ENCODE measurements at regions of chr7 and their contacts with region 1.

Region 1: GRCh38 chr7:112510001-112510742 is 29.4 kb downstream of the LSMEM1 start:
- DNase-seq: peak; percentile 10
- H3K4me3 Mint-ChIP-seq: no peak overlapping the region
- H3K27ac Mint-ChIP-seq: no peak overlapping the region
- H3K4me1 Mint-ChIP-seq: peaks cover 11% of the 10 kb centered on the region
- H3K27me3 Mint-ChIP-seq: no peaks in the 10 kb centered on the region

Region 2: DNA sequence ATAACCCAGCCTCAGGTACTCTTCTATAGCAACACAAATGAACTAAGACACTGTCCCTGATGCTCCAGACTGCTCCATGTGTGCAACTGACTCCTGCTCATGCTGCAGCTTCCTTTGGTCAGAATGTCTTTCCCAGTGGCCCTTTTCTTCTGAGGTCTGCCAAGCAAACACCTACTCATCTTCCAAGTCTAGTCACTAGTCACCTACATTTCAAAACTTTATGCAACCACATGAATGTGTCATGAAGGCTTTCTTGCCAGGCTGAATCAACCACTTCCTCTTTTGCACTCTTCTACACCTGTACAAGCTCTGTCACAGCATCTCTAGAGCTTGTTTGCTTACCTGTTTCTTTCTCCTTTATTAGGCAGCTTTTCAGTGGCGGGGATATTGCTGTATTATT is 46.5 kb after region 1 on chr7:
- CTCF ChIA-PET with region 1: no interaction called
- intact Hi-C with region 1: loop called (anchors 1 kb)
- DNase-seq: peak; percentile 43
- H3K4me3 Mint-ChIP-seq: no peak overlapping the region
- H3K27ac Mint-ChIP-seq: no peak overlapping the region
- H3K4me1 Mint-ChIP-seq: peaks cover 14% of the 10 kb centered on the region
- H3K27me3 Mint-ChIP-seq: no peaks in the 10 kb centered on the region

Region 3: GRCh38 chr7:112669306-112669705 is 159.1 kb after region 1 on chr7:
- CTCF ChIA-PET with region 1: no interaction called
- intact Hi-C with region 1: no loop called
- DNase-seq: no peak
- H3K4me3 Mint-ChIP-seq: no peak overlapping the region
- H3K27ac Mint-ChIP-seq: no peak overlapping the region
- H3K4me1 Mint-ChIP-seq: no peaks in the 10 kb centered on the region
- H3K27me3 Mint-ChIP-seq: peaks cover 7% of the 10 kb centered on the region

Region 4: GRCh38 chr7:112898432-112899290 is 388.5 kb after region 1 on chr7:
- CTCF ChIA-PET with region 1: no interaction called
- intact Hi-C with region 1: loop called (anchors 5 kb)
- DNase-seq: peak; percentile 61
- H3K4me3 Mint-ChIP-seq: no peak overlapping the region
- H3K27ac Mint-ChIP-seq: no peak overlapping the region
- H3K4me1 Mint-ChIP-seq: no peaks in the 10 kb centered on the region
- H3K27me3 Mint-ChIP-seq: no peaks in the 10 kb centered on the region